ENCODE measurements at regions of chr17 and their contacts with region 1.

Region 1: GRCh38 chr17:58112970-58113631 is 29.9 kb downstream of the DYNLL2 start:
- DNase-seq: peak; percentile 80
- H3K4me3 ChIP-seq: no peak overlapping the region
- H3K27ac ChIP-seq: no peak overlapping the region
- H3K4me1 ChIP-seq: no peaks in the 10 kb centered on the region
- H3K27me3 ChIP-seq: no peaks in the 10 kb centered on the region
- CTCF ChIP-seq: peak; percentile 82 to 94 (median 91)
- POLR2A ChIP-seq: no peak

Region 2: DNA sequence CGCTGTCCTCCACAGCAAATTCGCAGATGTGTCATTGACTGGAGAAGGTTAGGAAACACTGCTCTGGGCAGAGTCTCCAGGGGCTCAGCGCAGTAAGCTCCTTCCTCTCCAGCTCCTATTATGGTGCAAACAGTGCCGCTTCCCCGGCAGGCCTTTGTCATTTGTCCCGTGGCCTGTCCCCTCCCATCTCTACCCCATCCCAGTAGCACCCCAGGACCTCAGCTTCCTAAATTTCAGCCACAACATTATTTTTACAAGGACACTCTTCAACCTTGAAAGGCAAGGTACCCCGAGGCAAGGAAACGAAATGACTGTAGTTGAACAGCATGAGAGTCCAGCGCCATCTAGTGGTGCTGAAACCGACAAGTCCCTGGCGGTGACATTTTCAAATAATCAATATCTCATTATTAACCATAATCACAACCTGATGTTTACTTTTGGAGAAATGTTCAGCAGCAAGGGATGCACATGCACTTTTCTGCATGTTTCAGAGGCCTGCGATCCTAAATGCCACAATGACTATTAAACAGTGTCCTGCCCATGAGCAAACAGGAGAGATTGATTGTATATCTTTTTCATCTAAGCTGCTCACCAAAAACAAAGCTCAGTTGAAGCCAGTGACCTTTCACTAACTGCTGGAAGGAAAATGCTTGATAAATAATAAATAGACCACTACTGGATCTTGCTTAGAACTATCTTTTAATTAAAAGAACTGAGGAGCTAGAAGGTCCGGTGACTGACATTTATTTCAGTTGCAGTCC is 279.7 kb before region 1 on chr17:
- intact Hi-C with region 1: no loop called
- DNase-seq: peak; percentile 77
- H3K4me3 ChIP-seq: peak overlapping the region; percentile 19 to 30
- H3K27ac ChIP-seq: peak overlapping the region; percentile 83 to 84
- H3K4me1 ChIP-seq: peaks cover 7% of the 10 kb centered on the region
- H3K27me3 ChIP-seq: no peaks in the 10 kb centered on the region
- CTCF ChIP-seq: peak; percentile 85 to 93 (median 90)
- POLR2A ChIP-seq: no peak

Region 3: GRCh38 chr17:57855391-57856035 is 257.6 kb before region 1 on chr17:
- intact Hi-C with region 1: loop called (anchors 5 kb)
- DNase-seq: no peak
- H3K4me3 ChIP-seq: no peak overlapping the region
- H3K27ac ChIP-seq: peak overlapping the region; percentile 26 to 28
- H3K4me1 ChIP-seq: peaks cover 19% of the 10 kb centered on the region
- H3K27me3 ChIP-seq: no peaks in the 10 kb centered on the region
- CTCF ChIP-seq: no peak
- POLR2A ChIP-seq: no peak

Region 4: DNA sequence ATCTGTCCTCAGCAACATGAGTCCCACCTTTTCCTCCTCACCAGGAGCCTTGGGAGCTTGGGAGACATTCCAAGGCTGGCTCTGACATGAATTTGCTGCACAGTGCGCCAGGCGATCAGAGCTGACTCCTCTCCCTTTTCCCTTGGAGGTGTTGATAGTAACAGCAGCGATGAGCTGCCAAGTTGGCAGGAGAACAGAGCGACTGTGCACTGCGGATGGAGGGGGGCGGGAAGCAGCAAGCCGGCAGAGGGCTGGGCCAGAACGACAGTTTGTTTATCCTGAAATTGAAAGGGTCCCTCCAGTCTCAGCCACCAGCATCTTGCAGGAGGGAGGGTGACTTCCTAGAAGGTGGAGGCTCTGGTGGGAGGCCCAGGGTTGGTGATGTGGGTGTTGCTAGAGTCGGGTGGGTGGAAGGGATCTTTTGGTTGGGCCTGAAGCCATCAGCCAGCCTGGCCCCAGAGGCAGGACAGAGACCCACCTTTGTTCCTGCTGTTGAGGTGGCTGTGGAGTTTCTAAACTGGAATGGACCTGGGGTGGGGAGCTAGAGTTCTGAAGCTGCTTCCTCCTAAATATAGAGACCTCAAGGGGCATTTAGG is 52.4 kb before region 1 on chr17:
- intact Hi-C with region 1: no loop called
- DNase-seq: peak; percentile 69
- H3K4me3 ChIP-seq: no peak overlapping the region
- H3K27ac ChIP-seq: peak overlapping the region in 1 of 2 donors; percentile 6
- H3K4me1 ChIP-seq: no peaks in the 10 kb centered on the region
- H3K27me3 ChIP-seq: no peaks in the 10 kb centered on the region
- CTCF ChIP-seq: no peak
- POLR2A ChIP-seq: no peak